Right ventricle myocardium inferior (tissue), 1 donor: ENCODE measurements at regions of chr17 and their contacts with region 1.

Region 1: DNA sequence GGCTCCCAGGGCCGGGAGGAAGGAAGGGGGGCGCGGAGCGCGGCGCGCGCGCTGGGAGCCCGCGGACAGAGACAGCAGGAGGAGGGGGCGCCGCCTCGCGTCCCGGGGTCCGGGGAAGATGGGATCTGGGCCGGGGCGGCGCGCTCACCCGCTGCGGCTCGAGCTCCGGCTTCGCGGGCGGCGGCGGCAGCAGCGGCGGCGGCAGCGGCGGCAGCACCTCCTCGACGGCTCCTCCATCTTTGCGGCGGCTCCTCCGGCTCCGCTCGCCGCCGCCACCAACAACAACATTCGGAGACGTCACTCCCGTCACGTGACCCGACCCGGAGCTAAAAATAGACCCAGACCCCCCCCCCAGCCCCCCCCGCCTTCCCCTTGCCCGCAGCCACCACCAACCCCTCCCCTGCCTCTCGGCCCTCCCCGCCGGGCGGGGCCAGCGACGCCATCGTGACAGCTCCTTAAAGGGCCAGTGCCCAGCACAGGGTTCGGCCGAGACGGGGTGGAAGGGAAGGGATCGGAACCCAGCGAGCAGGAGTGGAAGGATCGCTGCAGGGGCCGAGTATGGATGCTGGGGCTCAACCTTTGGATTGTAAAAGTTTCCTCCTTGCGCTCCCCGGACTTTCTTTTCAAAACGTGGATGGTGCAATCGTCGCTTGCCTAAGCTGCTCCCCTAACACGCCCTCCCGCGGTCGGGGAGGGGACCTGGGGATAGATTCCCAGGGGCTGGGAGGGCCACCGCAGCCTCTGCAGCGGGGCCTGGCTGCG is at the start of gene HDAC5:
- DNase-seq: peak; percentile 99
- ATAC-seq: peak; percentile 97
- total RNA-seq, gene HDAC5: 67.5 TPM

Region 2: GRCh38 chr17:44014437-44015172 is 108.9 kb before region 1 on chr17 and contains the start of gene TMEM101:
- intact Hi-C with region 1: loop called (anchors 5 kb)
- DNase-seq: peak; percentile 96
- ATAC-seq: peak; percentile 88
- total RNA-seq, gene TMEM101: 21.5 TPM

Region 3: DNA sequence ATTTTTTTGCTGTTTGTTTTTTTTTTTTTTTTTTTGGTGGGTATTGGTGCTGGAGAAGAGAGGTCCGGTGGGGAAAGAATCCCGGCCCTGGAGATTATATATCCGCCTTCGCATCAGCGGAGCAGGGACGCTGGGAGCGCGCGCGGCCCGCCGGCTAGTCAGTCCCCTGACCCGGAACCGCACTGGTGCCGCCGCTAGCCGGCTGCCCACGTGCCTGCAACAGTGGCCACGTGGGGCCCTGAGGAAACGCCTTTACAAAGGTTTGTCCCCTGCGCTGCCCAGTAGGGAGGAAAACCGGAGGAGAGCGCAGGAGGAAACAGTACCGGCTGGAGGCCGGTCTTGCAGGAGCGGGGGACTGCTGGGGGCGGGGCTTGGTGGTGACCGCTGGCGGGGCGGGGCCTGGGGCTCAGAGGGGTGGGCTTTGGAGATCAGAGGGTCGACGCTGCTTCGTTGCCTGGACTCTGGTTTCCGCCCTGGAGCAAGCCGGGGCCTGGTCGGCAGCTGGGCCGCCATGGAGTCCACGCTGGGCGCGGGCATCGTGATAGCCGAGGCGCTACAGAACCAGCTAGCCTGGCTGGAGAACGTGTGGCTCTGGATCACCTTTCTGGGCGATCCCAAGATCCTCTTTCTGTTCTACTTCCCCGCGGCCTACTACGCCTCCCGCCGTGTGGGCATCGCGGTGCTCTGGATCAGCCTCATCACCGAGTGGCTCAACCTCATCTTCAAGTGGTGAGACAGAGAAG is 52.9 kb before region 1 on chr17 and contains the start of gene G6PC3:
- intact Hi-C with region 1: loop called (anchors 2 kb)
- DNase-seq: peak; percentile 96
- ATAC-seq: peak; percentile 95
- total RNA-seq, gene G6PC3: 30.4 TPM

Region 4: GRCh38 chr17:44170499-44171201 is 47.1 kb after region 1 on chr17 and contains the start of gene ASB16:
- intact Hi-C with region 1: loop called (anchors 10 kb)
- DNase-seq: no peak
- ATAC-seq: peak; percentile 78
- total RNA-seq, gene ASB16: 14.5 TPM